H1 (cell line): ENCODE measurements at regions of chr1 and their contacts with region 1.

Region 1: DNA sequence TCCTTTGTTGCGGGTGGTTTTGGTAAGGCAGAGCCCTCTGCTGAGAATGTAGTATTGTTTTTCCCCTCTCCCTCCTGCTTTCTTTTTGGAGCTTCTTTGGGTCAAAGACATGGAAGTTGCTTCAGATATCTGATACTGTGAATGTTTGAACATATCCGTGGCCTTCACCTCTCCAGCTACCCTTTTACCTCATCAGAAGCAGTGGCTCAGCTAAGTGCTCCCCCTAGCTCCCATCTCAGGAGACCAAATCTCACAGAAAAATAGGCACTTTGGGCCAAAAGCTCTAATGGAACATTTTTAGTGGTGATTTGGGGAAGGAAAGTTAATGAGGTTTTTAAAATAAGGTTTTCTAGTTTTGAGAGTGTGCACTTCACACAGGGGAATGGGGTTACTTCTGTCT is 6.3 kb downstream of the TMEM200B start:
- DNase-seq: no peak
- H3K4me3 ChIP-seq: no peak overlapping the region
- H3K27ac ChIP-seq: no peak overlapping the region
- H3K4me1 ChIP-seq: peaks cover 2 to 5% (median 3%) of the 10 kb centered on the region in 4 experiments; a peak in 4 of 7 replicates
- H3K27me3 ChIP-seq: peaks cover 0 to 17% (median 11%) of the 10 kb centered on the region in 4 experiments; a peak in 6 of 7 replicates
- CTCF ChIP-seq: peak in 2 of 3 experiments; percentile 30 to 47; a peak in 2 of 4 replicates
- EP300 ChIP-seq: no peak
- POLR2A ChIP-seq: no peak
- RAD21 ChIP-seq: peak; percentile 35 to 54; a peak in 3 of 4 replicates

Region 2: GRCh38 chr1:29100487-29100886 is 16.9 kb before region 1 on chr1:
- CTCF ChIA-PET with region 1: interaction called, 12 read pairs
- POLR2A ChIA-PET with region 1: interaction called, 6 read pairs
- DNase-seq: no peak
- H3K4me3 ChIP-seq: no peak overlapping the region
- H3K27ac ChIP-seq: no peak overlapping the region
- H3K4me1 ChIP-seq: peaks cover 0 to 7% (median 1%) of the 10 kb centered on the region in 4 experiments; a peak in 2 of 7 replicates
- H3K27me3 ChIP-seq: no peaks in the 10 kb centered on the region
- CTCF ChIP-seq: no peak
- EP300 ChIP-seq: no peak
- POLR2A ChIP-seq: no peak
- RAD21 ChIP-seq: no peak